ENCODE measurements at regions of chr19 and their contacts with region 1.

Region 1: GRCh38 chr19:29771708-29772414 is 39.9 kb upstream of the CCNE1 start:
- DNase-seq: peak; percentile 30
- H3K4me3 ChIP-seq: no peak overlapping the region
- H3K27ac ChIP-seq: no peak overlapping the region
- H3K4me1 ChIP-seq: no peaks in the 10 kb centered on the region
- H3K27me3 ChIP-seq: no peaks in the 10 kb centered on the region
- CTCF ChIP-seq: peak; percentile 55 to 75

Region 2: DNA sequence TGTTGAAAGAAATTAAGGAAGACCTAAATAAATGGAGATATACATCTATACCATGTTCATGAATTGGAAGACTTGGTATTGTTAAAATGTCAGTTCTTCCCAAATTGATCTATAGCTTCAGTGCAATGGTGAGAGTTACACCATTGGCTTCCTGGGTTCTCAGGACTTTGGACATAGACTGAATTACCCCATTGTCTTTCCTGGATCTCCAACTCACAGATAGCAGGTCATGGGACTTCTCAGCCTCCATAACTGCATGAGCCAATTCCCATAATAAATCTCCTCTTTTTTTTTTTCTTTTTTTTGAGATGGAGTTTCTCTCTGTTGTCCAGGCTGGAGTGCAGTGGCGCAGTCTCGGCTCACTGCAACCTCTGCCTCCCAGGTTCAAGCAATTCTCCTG is 78.6 kb after region 1 on chr19:
- CTCF ChIA-PET with region 1: interaction called, 14 read pairs
- dilution Hi-C with region 1: no loop called
- in situ Hi-C with region 1: loop called in 1 of 2 experiments (anchors 25 kb)
- intact Hi-C with region 1: no loop called
- DNase-seq: no peak
- H3K4me3 ChIP-seq: no peak overlapping the region
- H3K27ac ChIP-seq: no peak overlapping the region
- H3K4me1 ChIP-seq: peaks cover 1% of the 10 kb centered on the region
- H3K27me3 ChIP-seq: no peaks in the 10 kb centered on the region
- CTCF ChIP-seq: no peak

Region 3: GRCh38 chr19:29873024-29873800 is 101.4 kb after region 1 on chr19:
- CTCF ChIA-PET with region 1: no interaction called
- dilution Hi-C with region 1: no loop called
- in situ Hi-C with region 1: loop called in 1 of 2 experiments (anchors 25 kb)
- intact Hi-C with region 1: loop called (anchors 1 kb)
- DNase-seq: no peak
- H3K4me3 ChIP-seq: peak overlapping the region; percentile 28 to 46 (median 33)
- H3K27ac ChIP-seq: no peak overlapping the region
- H3K4me1 ChIP-seq: peaks cover 11% of the 10 kb centered on the region
- H3K27me3 ChIP-seq: no peaks in the 10 kb centered on the region
- CTCF ChIP-seq: peak; percentile 33 to 66

Region 4: GRCh38 chr19:29881386-29881785 is 109.5 kb after region 1 on chr19:
- CTCF ChIA-PET with region 1: no interaction called
- dilution Hi-C with region 1: no loop called
- in situ Hi-C with region 1: loop called in 1 of 2 experiments (anchors 5 kb)
- intact Hi-C with region 1: no loop called
- DNase-seq: peak; percentile 15
- H3K4me3 ChIP-seq: no peak overlapping the region
- H3K27ac ChIP-seq: no peak overlapping the region
- H3K4me1 ChIP-seq: no peaks in the 10 kb centered on the region
- H3K27me3 ChIP-seq: no peaks in the 10 kb centered on the region
- CTCF ChIP-seq: no peak

Region 5: DNA sequence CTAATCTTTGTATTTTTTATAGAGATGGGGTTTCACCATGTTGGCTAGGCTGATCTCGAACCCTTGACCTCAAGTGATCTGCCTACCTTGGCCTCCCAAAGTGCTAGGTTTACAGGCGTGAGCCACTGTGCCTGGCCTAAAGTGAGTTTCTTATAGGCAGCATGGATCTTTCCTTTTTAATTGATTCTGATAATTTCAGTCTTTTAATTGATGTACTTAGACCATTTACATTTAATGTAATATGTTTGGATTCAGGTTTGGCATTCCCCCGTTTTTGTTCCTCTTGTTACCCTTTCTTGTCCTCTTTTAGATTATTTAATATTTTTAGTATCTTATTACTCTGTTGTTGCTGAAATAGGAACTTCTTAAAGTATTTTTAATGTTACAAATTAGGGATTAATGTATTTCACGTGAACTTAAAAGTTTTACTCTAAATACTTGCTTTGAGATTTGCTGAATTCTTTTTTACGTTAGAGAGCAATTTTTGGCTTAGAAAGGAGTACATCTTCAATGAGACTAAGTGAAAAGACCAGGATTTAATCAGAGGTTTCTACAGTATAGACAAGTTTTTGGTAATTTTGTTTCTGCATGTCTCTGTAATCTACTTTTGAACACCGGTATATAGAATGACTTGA is 220.5 kb after region 1 on chr19:
- CTCF ChIA-PET with region 1: no interaction called
- dilution Hi-C with region 1: no loop called
- in situ Hi-C with region 1: no loop called
- intact Hi-C with region 1: no loop called
- DNase-seq: no peak
- H3K4me3 ChIP-seq: no peak overlapping the region
- H3K27ac ChIP-seq: no peak overlapping the region
- H3K4me1 ChIP-seq: no peaks in the 10 kb centered on the region
- H3K27me3 ChIP-seq: no peaks in the 10 kb centered on the region
- CTCF ChIP-seq: no peak

Measured in mammary epithelial cell (primary cell).